BJ (cell line): ENCODE measurements at regions of chr2 and their contacts with region 1.

Region 1: GRCh38 chr2:30354621-30355020 is 92.4 kb upstream of the LCLAT1 start:
- DNase-seq: no peak
- H3K4me3 ChIP-seq: no peak overlapping the region
- H3K27me3 ChIP-seq: no peaks in the 10 kb centered on the region
- CTCF ChIP-seq: no peak

Region 2: GRCh38 chr2:30252723-30253701 is 101.6 kb before region 1 on chr2:
- CTCF ChIA-PET with region 1: no interaction called
- POLR2A ChIA-PET with region 1: interaction called, 11 read pairs
- DNase-seq: peak; percentile 40
- H3K4me3 ChIP-seq: no peak overlapping the region
- H3K27me3 ChIP-seq: no peaks in the 10 kb centered on the region
- CTCF ChIP-seq: no peak